ENCODE measurements at regions of chr5 and their contacts with region 1.

Region 1: GRCh38 chr5:77491783-77492652 is at the start of gene WDR41:
- DNase-seq: peak; percentile 90
- H3K4me3 Mint-ChIP-seq: peak within 1 kb of the TSS; percentile 76
- H3K27ac Mint-ChIP-seq: peak within 1 kb of the TSS; percentile 86
- H3K4me1 Mint-ChIP-seq: peaks cover 23% of the 10 kb centered on the region
- H3K27me3 Mint-ChIP-seq: peaks cover 7% of the 10 kb centered on the region
- total RNA-seq, gene WDR41: 30.5 to 32.6 TPM

Region 2: GRCh38 chr5:77030097-77031071 is 461.6 kb before region 1 on chr5 and contains the start of gene AGGF1:
- CTCF ChIA-PET with region 1: interaction called, 13 read pairs
- POLR2A ChIA-PET with region 1: no interaction called
- intact Hi-C with region 1: no loop called
- DNase-seq: peak; percentile 96
- H3K4me3 Mint-ChIP-seq: peak within 1 kb of the TSS; percentile 88
- H3K27ac Mint-ChIP-seq: peak within 1 kb of the TSS; percentile 78
- H3K4me1 Mint-ChIP-seq: peaks cover 32% of the 10 kb centered on the region
- H3K27me3 Mint-ChIP-seq: no peaks in the 10 kb centered on the region
- total RNA-seq, gene AGGF1: 26.5 to 27.6 TPM

Region 3: DNA sequence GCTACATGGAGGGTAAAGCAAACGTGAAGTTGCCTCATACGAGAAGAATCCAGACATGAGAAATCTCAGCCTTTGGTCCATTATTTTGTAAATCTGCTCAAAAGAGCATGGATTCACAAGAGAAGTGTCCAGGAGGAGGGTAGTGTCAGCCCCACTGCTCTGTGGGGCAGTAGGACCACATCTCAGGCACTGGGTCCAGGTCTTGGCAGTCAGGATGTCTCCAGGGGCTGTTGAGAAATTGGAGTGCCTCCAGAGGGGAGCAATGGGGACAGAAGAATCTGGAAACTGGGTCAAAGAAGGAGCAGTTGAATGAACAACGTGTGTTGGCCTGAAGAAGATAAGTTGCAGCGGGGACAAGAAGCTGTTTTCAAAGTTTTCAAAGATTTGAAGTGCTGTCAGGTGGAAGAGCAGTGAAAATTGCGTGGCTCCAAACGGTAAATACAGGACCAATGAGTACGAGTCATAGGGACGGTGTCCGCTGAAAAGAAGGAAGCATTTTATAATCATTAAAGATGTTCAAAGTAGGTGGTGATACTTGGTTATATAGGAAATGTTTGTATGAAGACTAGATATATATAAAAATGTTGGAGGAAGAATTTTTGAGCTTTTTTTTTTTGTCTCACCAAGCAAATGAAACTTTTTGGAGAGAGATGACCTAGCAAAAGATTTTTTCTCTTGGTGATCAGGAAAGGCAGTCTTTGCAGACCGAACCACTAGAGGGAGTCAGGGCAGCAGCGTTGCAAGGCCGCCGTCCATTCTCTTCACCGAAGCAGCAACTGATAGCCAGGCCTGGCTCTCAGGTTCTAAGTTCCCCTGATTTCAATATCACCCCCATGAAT is 347.8 kb before region 1 on chr5:
- CTCF ChIA-PET with region 1: interaction called, 65 read pairs
- POLR2A ChIA-PET with region 1: interaction called, 3 read pairs
- intact Hi-C with region 1: loop called (anchors 1 kb)
- DNase-seq: peak; percentile 75
- H3K4me3 Mint-ChIP-seq: no peak overlapping the region
- H3K27ac Mint-ChIP-seq: no peak overlapping the region
- H3K4me1 Mint-ChIP-seq: peaks cover 24% of the 10 kb centered on the region
- H3K27me3 Mint-ChIP-seq: peaks cover 5% of the 10 kb centered on the region

Region 4: GRCh38 chr5:77379558-77380061 is 112.4 kb before region 1 on chr5:
- CTCF ChIA-PET with region 1: interaction called, 15 read pairs
- POLR2A ChIA-PET with region 1: interaction called, 4 read pairs
- intact Hi-C with region 1: loop called (anchors 5 kb)
- DNase-seq: peak; percentile 81
- H3K4me3 Mint-ChIP-seq: no peak overlapping the region
- H3K27ac Mint-ChIP-seq: peak overlapping the region; percentile 64
- H3K4me1 Mint-ChIP-seq: peaks cover 31% of the 10 kb centered on the region
- H3K27me3 Mint-ChIP-seq: peaks cover 3% of the 10 kb centered on the region

Region 5: GRCh38 chr5:77590347-77590746 is 98.3 kb after region 1 on chr5:
- CTCF ChIA-PET with region 1: no interaction called
- POLR2A ChIA-PET with region 1: no interaction called
- intact Hi-C with region 1: no loop called
- DNase-seq: no peak
- H3K4me3 Mint-ChIP-seq: no peak overlapping the region
- H3K27ac Mint-ChIP-seq: no peak overlapping the region
- H3K4me1 Mint-ChIP-seq: no peaks in the 10 kb centered on the region
- H3K27me3 Mint-ChIP-seq: peaks cover 5% of the 10 kb centered on the region

Region 6: GRCh38 chr5:77946381-77947040 is 454.5 kb after region 1 on chr5:
- CTCF ChIA-PET with region 1: no interaction called
- POLR2A ChIA-PET with region 1: no interaction called
- intact Hi-C with region 1: no loop called
- DNase-seq: no peak
- H3K4me3 Mint-ChIP-seq: no peak overlapping the region
- H3K27ac Mint-ChIP-seq: no peak overlapping the region
- H3K4me1 Mint-ChIP-seq: no peaks in the 10 kb centered on the region
- H3K27me3 Mint-ChIP-seq: peaks cover 17% of the 10 kb centered on the region

Measured in activated CD4-positive, alpha-beta memory T cell treated with anti-CD3 and anti-CD28 coated beads for 36 hours (primary cell).